ENCODE measurements at regions of chr3 and their contacts with region 1.

Region 1: GRCh38 chr3:6785726-6786125 is 75.2 kb upstream of the GRM7 start:
- DNase-seq: peak in 1 of 10 donors; percentile 31
- H3K4me3 ChIP-seq: no peak overlapping the region
- H3K27ac ChIP-seq: no peak overlapping the region
- H3K27me3 ChIP-seq: no peaks in the 10 kb centered on the region
- CTCF ChIP-seq: no peak

Region 2: DNA sequence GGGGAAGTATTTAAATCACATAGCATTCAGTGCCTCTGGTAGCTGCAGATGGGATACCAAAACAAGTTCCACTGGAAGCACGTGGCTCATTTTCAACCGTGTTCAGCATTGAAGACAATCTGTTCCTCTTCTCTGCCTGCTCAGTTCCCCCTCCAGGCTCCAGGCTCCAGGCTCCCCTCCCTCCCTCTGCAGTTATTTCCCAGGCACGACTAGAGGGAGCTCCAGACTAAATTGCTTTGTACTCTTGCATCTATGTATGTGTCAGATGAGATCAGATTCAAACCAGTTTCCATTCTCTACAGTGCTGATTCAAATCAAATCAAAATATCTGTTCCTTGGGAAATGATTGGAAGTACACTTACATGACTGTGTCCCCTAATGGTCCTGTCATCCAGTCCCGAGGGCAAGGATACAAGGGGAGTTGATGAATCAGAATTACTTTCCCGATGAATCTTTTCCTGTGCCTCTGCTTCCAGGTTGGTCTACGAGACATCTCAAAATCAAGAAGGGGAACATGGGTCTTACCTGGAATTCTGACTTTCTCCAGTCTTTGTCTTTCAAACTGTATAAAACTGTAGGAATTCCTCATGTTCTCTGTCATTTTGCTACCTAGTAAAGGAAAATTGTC is 997.8 kb before region 1 on chr3:
- intact Hi-C with region 1: loop called in 1 of 2 experiments (anchors 5 kb)
- DNase-seq: peak in 9 of 10 donors; percentile 11 to 77 (median 60)
- H3K4me3 ChIP-seq: peak overlapping the region in 29 of 59 donors; percentile 4 to 49 (median 25)
- H3K27ac ChIP-seq: peak overlapping the region in 31 of 59 donors; percentile 2 to 82 (median 40)
- H3K27me3 ChIP-seq: no peaks in the 10 kb centered on the region
- CTCF ChIP-seq: peak in 46 of 56 donors; percentile 13 to 60 (median 40)

Region 3: GRCh38 chr3:6821411-6821810 is 35.7 kb after region 1 on chr3:
- intact Hi-C with region 1: no loop called
- DNase-seq: no peak
- H3K4me3 ChIP-seq: no peak overlapping the region
- H3K27ac ChIP-seq: no peak overlapping the region
- H3K27me3 ChIP-seq: no peaks in the 10 kb centered on the region
- CTCF ChIP-seq: no peak

Region 4: GRCh38 chr3:7100136-7100535 is 314.4 kb after region 1 on chr3:
- intact Hi-C with region 1: no loop called
- DNase-seq: no peak
- H3K4me3 ChIP-seq: no peak overlapping the region
- H3K27ac ChIP-seq: no peak overlapping the region
- H3K27me3 ChIP-seq: no peaks in the 10 kb centered on the region
- CTCF ChIP-seq: no peak